Right cardiac atrium (tissue), 5 donors: ENCODE measurements at regions of chr9 and their contacts with region 1.

Region 1: GRCh38 chr9:90169490-90169889 is 473.1 kb downstream of the DIRAS2 start:
- DNase-seq: no peak
- ATAC-seq: no peak
- H3K4me3 ChIP-seq: no peak overlapping the region
- H3K27ac ChIP-seq: no peak overlapping the region
- H3K4me1 ChIP-seq: no peaks in the 10 kb centered on the region
- H3K27me3 ChIP-seq: no peaks in the 10 kb centered on the region

Region 2: DNA sequence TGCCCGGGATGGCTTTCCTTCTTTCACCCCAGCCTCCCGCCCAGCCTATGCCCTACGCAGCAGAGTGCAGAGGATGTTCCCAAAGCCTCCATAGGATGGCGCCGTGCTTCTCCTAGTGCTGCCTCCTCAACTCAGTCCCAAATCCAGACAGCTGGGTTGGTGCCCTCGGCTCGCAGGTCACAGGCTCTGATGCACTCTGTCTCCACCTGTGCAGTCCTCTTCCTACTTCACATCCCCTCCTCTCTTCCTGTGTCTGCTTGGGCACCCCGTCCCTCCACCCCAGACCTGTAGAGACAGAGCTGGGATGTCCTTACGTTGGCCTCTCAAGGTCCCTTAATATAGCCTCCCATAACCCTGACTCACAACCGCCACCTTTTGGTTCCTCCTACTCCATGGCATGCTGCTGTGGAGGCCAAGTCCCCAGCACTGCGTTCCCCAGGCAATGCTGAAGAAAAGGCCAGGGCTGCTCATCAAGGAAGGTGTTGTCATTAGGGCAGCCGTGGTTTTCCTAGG is 250.3 kb before region 1 on chr9:
- intact Hi-C with region 1: no loop called
- DNase-seq: peak in 1 of 3 donors; percentile 64
- ATAC-seq: peak; percentile 77 to 90
- H3K4me3 ChIP-seq: no peak overlapping the region
- H3K27ac ChIP-seq: no peak overlapping the region
- H3K4me1 ChIP-seq: no peaks in the 10 kb centered on the region
- H3K27me3 ChIP-seq: no peaks in the 10 kb centered on the region

Region 3: DNA sequence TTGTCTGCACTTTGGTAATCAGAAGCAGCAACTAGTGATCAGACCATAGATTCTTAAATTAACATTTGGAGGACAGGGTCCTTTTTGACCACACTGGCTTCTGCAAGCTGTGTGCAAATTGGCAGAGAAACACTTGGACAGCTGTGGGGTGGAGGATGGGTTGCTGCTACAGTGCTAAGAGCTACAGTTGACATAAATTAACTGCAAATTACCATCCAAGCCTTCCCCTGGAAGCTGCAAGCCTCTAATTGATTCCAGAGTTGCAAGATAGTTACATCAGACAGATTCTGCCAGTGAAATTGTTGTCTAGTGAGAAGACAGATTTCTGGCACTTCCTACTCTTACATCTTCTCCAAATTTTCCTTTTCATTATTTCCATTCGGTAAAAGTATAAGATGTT is 44.5 kb before region 1 on chr9:
- intact Hi-C with region 1: loop called in 1 of 4 experiments (anchors 5 kb)
- DNase-seq: no peak
- ATAC-seq: no peak
- H3K4me3 ChIP-seq: no peak overlapping the region
- H3K27ac ChIP-seq: no peak overlapping the region
- H3K4me1 ChIP-seq: no peaks in the 10 kb centered on the region
- H3K27me3 ChIP-seq: no peaks in the 10 kb centered on the region